ENCODE measurements at regions of chr1 and their contacts with region 1.

Region 1: DNA sequence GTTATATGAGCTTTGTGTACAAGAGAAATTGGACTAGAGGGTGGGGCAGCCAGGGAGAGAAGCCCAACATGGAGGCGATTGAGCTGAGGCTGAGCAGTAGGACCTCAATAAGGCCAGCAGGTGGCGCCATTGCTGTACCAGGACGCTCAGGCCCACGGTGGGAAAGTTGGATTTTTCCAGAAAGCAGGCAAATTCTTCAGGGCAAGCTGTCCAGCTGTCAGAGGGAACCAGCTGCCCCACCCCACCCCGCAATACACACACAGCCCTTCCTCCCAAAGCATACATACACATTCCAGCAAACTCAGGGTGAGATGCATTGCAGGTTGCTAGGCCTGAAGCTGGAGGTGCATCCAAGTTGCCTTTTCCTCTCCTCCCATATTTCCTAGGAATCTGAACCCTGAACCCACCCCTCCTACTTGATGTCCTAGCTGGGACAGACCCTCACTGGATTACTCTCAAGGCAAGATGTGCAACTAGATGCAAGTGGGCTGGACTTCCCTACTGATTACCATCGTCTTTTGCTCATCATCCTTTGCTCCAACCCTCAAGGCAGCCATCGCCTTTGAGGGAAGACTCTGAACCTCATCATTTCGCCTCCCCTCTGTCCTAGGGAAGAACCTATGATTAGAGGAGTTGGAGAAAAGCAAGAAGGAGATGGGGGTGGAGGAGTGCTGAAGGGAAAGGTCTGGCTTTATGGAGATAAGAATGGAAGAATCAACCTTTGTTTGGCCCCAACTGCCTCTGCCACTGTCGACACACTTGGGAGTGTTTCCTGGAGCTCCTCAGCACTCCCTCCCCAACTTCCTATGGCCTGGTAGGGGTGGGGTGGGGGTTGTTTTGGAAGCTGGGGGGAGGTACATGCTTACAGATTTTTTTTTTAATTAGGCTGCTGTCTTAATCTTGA is 25.5 kb downstream of the CD34 start:
- DNase-seq: peak; percentile 87
- H3K4me3 ChIP-seq: no peak overlapping the region
- H3K4me3 Mint-ChIP-seq: no peak overlapping the region
- H3K27ac Mint-ChIP-seq: peak overlapping the region; percentile 42
- H3K4me1 ChIP-seq: peaks cover 8% of the 10 kb centered on the region
- H3K4me1 Mint-ChIP-seq: peaks cover 6% of the 10 kb centered on the region
- H3K27me3 ChIP-seq: no peaks in the 10 kb centered on the region
- H3K27me3 Mint-ChIP-seq: peaks cover under 1% of the 10 kb centered on the region
- CTCF ChIP-seq: peak; percentile 94 to 95

Region 2: DNA sequence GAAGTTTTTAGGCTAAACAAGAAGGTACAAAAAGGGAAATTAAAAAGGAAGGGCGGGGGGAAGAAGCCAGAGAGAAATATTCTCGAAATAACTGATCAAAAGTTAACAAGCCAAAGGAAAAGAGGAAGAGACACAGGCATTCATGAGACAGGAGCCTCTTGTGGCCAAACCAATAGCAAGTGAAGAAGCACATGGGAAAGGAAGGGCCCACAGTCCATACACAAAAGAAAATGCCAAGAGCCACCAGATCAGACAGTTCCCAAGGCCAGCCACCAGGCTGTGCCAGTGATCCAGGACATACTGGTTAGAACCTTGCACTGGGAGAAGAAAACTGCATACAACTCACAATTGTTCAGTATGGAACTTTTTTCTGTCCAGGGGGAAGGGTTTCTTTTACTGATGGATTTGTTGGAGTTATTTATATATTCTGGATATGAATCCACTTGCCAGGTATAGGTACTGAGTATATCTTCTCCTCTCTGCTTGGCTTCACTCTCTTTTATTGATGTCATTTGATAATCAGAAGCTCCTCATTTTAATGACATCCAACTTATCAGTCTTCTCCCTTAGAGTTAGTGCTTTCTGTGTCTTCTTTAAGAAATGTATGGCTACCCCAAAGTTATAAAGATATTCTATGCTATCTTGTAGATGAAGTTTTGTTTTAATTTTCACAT is 56.8 kb before region 1 on chr1:
- CTCF ChIA-PET with region 1: interaction called, 10 read pairs
- POLR2A ChIA-PET with region 1: interaction called, 5 read pairs
- intact Hi-C with region 1: loop called (anchors 1 kb)
- DNase-seq: peak; percentile 81 to 86
- H3K4me3 ChIP-seq: no peak overlapping the region
- H3K4me3 Mint-ChIP-seq: no peak overlapping the region
- H3K27ac Mint-ChIP-seq: peak overlapping the region; percentile 81
- H3K4me1 ChIP-seq: peaks cover 40% of the 10 kb centered on the region
- H3K4me1 Mint-ChIP-seq: peaks cover 39% of the 10 kb centered on the region
- H3K27me3 ChIP-seq: no peaks in the 10 kb centered on the region
- H3K27me3 Mint-ChIP-seq: no peaks in the 10 kb centered on the region
- CTCF ChIP-seq: peak; percentile 85 to 91

Region 3: GRCh38 chr1:207868774-207869721 is 16.3 kb before region 1 on chr1:
- CTCF ChIA-PET with region 1: interaction called, 20 read pairs
- POLR2A ChIA-PET with region 1: no interaction called
- intact Hi-C with region 1: loop called (anchors 1 kb)
- DNase-seq: peak; percentile 64 to 86
- H3K4me3 ChIP-seq: peak overlapping the region; percentile 72
- H3K4me3 Mint-ChIP-seq: peak overlapping the region; percentile 75
- H3K27ac Mint-ChIP-seq: peak overlapping the region; percentile 82
- H3K4me1 ChIP-seq: peaks cover 49% of the 10 kb centered on the region
- H3K4me1 Mint-ChIP-seq: peaks cover 50% of the 10 kb centered on the region
- H3K27me3 ChIP-seq: no peaks in the 10 kb centered on the region
- H3K27me3 Mint-ChIP-seq: no peaks in the 10 kb centered on the region
- CTCF ChIP-seq: peak; percentile 72 to 77

Region 4: DNA sequence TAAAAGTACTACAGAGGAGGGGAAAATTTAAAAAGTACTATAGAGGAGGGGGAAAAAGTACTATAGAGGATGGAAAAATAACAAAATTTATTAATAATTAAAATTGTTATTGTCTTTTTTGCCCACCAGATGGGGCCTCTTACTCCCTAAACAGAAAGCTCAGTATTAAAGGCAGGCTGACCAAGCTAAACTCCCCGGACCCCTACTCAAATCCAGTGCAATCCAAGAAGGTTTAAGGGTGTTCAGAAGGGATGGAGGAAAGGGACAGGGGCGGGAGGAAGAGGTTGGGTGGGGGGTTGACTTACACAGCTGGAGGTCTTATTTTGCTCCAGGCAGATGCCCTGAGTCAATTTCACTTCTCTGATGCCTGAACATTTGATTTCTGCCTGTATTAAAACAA is 11.8 kb after region 1 on chr1:
- CTCF ChIA-PET with region 1: interaction called, 16 read pairs
- POLR2A ChIA-PET with region 1: no interaction called
- intact Hi-C with region 1: loop called (anchors 1 kb)
- DNase-seq: no peak
- H3K4me3 ChIP-seq: no peak overlapping the region
- H3K4me3 Mint-ChIP-seq: no peak overlapping the region
- H3K27ac Mint-ChIP-seq: no peak overlapping the region
- H3K4me1 ChIP-seq: no peaks in the 10 kb centered on the region
- H3K4me1 Mint-ChIP-seq: no peaks in the 10 kb centered on the region
- H3K27me3 ChIP-seq: no peaks in the 10 kb centered on the region
- H3K27me3 Mint-ChIP-seq: no peaks in the 10 kb centered on the region
- CTCF ChIP-seq: peak; percentile 23 to 47

Region 5: DNA sequence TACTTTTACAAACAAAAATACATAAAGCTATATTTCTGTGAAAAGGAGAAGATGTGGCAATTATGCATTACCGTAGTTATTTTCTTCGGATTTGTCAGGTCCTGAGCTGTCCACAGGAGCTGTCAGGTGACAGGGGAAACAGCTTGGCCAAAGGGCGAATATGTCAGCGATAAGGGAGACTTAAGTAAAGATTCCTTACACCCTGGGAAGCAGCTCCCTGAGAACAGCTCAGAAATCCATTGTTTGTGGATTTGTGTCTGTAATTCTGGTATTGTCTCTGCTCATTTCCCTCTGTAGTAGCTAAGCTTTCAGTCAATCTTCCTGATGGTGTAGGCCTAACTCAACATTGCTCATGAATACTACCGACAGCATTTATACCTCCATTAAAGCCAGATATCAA is 32.6 kb after region 1 on chr1:
- CTCF ChIA-PET with region 1: interaction called, 9 read pairs
- POLR2A ChIA-PET with region 1: no interaction called
- intact Hi-C with region 1: loop called (anchors 1 kb)
- DNase-seq: peak; percentile 74 to 80
- H3K4me3 ChIP-seq: peak overlapping the region; percentile 13
- H3K4me3 Mint-ChIP-seq: peak overlapping the region; percentile 61
- H3K27ac Mint-ChIP-seq: peak overlapping the region; percentile 93
- H3K4me1 ChIP-seq: peaks cover 15% of the 10 kb centered on the region
- H3K4me1 Mint-ChIP-seq: peaks cover 22% of the 10 kb centered on the region
- H3K27me3 ChIP-seq: no peaks in the 10 kb centered on the region
- H3K27me3 Mint-ChIP-seq: no peaks in the 10 kb centered on the region
- CTCF ChIP-seq: no peak

Region 6: GRCh38 chr1:207997486-207998268 is 112.3 kb after region 1 on chr1:
- CTCF ChIA-PET with region 1: interaction called, 47 read pairs
- POLR2A ChIA-PET with region 1: no interaction called
- intact Hi-C with region 1: loop called (anchors 1 kb)
- DNase-seq: peak; percentile 63 to 70
- H3K4me3 ChIP-seq: no peak overlapping the region
- H3K4me3 Mint-ChIP-seq: no peak overlapping the region
- H3K27ac Mint-ChIP-seq: no peak overlapping the region
- H3K4me1 ChIP-seq: no peaks in the 10 kb centered on the region
- H3K4me1 Mint-ChIP-seq: no peaks in the 10 kb centered on the region
- H3K27me3 ChIP-seq: no peaks in the 10 kb centered on the region; the same call in 1 of the 2 replicates
- H3K27me3 Mint-ChIP-seq: peaks cover 17% of the 10 kb centered on the region
- CTCF ChIP-seq: peak; percentile 84 to 91

Region 7: DNA sequence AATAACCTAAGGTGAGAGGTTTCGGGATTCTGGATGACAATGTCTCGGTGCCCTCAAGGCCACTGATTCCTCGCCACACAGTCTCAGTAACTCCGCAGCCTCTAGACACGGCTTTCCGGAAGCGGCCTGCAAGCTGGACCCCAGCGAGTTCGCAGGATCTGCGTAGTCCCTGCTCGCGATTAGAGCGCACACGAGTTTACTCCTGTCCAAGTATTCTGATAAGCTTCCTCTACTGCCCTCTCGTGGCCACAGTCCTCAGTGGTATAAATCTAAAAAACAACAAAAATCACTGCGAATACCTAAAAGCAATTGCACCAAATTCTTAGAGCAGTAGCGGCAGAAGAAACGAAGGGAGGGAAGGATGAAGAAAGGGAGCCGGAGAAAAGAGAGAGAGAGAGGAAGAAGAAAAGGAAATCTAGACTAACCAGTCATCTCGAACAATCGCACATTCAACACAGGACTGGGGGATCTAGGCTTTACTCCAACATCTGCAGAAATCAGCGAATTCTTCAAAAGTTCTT is 359.9 kb after region 1 on chr1:
- CTCF ChIA-PET with region 1: no interaction called
- POLR2A ChIA-PET with region 1: no interaction called
- intact Hi-C with region 1: loop called (anchors 10 kb)
- DNase-seq: peak; percentile 83 to 86
- H3K4me3 ChIP-seq: peak overlapping the region; percentile 6; the same call in 1 of the 2 replicates
- H3K4me3 Mint-ChIP-seq: peak overlapping the region; percentile 88
- H3K27ac Mint-ChIP-seq: no peak overlapping the region
- H3K4me1 ChIP-seq: peaks cover 6% of the 10 kb centered on the region
- H3K4me1 Mint-ChIP-seq: peaks cover 7% of the 10 kb centered on the region
- H3K27me3 ChIP-seq: 0 out of 2 replicates have a peak, but pooled peaks cover 1% of the 10 kb centered on the region
- H3K27me3 Mint-ChIP-seq: peaks cover 16% of the 10 kb centered on the region
- CTCF ChIP-seq: peak; percentile 67 to 82